A549 (cell line): ENCODE measurements at regions of chr15 and their contacts with region 1.

Region 1: GRCh38 chr15:99213187-99213811 is 36.1 kb downstream of the TTC23 start:
- DNase-seq: peak; percentile 72 to 75
- ATAC-seq: peak; percentile 92 to 96; a peak in 5 of 6 replicates
- H3K4me3 ChIP-seq: no peak overlapping the region
- H3K27ac ChIP-seq: no peak overlapping the region
- H3K4me1 ChIP-seq: peaks cover 16% of the 10 kb centered on the region
- CTCF ChIP-seq: peak; percentile 99
- EP300 ChIP-seq: no peak
- POLR2A ChIP-seq: no peak
- RAD21 ChIP-seq: peak; percentile 98

Region 2: GRCh38 chr15:99104788-99105513 is 108.3 kb before region 1 on chr15 and contains the start of gene SYNM:
- CTCF ChIA-PET with region 1: interaction called, 372 read pairs
- POLR2A ChIA-PET with region 1: no interaction called
- DNase-seq: peak; percentile 93 to 94
- ATAC-seq: peak; percentile 83 to 91
- H3K4me3 ChIP-seq: peak within 1 kb of the TSS; percentile 64
- H3K27ac ChIP-seq: peak within 1 kb of the TSS; percentile 77 to 92
- H3K4me1 ChIP-seq: peaks cover 20% of the 10 kb centered on the region
- CTCF ChIP-seq: peak; percentile 99
- EP300 ChIP-seq: no peak
- POLR2A ChIP-seq: peak; percentile 100
- RAD21 ChIP-seq: peak; percentile 76 to 97
- polyA plus RNA-seq, gene SYNM: 22.6 and 23.7 TPM in 2 replicates

Region 3: GRCh38 chr15:99123706-99124451 is 89.4 kb before region 1 on chr15:
- CTCF ChIA-PET with region 1: interaction called, 15 read pairs
- POLR2A ChIA-PET with region 1: no interaction called
- DNase-seq: peak; percentile 92 to 94
- ATAC-seq: peak; percentile 86 to 93
- H3K4me3 ChIP-seq: peak overlapping the region; percentile 33
- H3K27ac ChIP-seq: peak overlapping the region; percentile 91 to 96
- H3K4me1 ChIP-seq: peaks cover 33% of the 10 kb centered on the region
- CTCF ChIP-seq: no peak
- EP300 ChIP-seq: peak; percentile 37 to 63; a peak in 3 of 5 replicates
- POLR2A ChIP-seq: no peak
- RAD21 ChIP-seq: peak; percentile 18 to 43; a peak in 2 of 5 replicates

Region 4: GRCh38 chr15:99181545-99181971 is 31.7 kb before region 1 on chr15:
- CTCF ChIA-PET with region 1: interaction called, 17 read pairs
- POLR2A ChIA-PET with region 1: no interaction called
- DNase-seq: no peak
- ATAC-seq: peak in 1 of 2 experiments; percentile 40; a peak in 3 of 6 replicates
- H3K4me3 ChIP-seq: no peak overlapping the region
- H3K27ac ChIP-seq: no peak overlapping the region
- H3K4me1 ChIP-seq: no peaks in the 10 kb centered on the region
- CTCF ChIP-seq: no peak
- EP300 ChIP-seq: no peak
- POLR2A ChIP-seq: no peak
- RAD21 ChIP-seq: no peak

Region 5: GRCh38 chr15:99224372-99225214 is 11.3 kb after region 1 on chr15:
- CTCF ChIA-PET with region 1: interaction called, 48 read pairs
- POLR2A ChIA-PET with region 1: no interaction called
- DNase-seq: no peak
- ATAC-seq: no peak
- H3K4me3 ChIP-seq: no peak overlapping the region
- H3K27ac ChIP-seq: no peak overlapping the region
- H3K4me1 ChIP-seq: no peaks in the 10 kb centered on the region
- CTCF ChIP-seq: no peak
- EP300 ChIP-seq: no peak
- POLR2A ChIP-seq: no peak
- RAD21 ChIP-seq: no peak